Gastrocnemius medialis (tissue), 4 donors: ENCODE measurements at regions of chr11 and their contacts with region 1.

Region 1: DNA sequence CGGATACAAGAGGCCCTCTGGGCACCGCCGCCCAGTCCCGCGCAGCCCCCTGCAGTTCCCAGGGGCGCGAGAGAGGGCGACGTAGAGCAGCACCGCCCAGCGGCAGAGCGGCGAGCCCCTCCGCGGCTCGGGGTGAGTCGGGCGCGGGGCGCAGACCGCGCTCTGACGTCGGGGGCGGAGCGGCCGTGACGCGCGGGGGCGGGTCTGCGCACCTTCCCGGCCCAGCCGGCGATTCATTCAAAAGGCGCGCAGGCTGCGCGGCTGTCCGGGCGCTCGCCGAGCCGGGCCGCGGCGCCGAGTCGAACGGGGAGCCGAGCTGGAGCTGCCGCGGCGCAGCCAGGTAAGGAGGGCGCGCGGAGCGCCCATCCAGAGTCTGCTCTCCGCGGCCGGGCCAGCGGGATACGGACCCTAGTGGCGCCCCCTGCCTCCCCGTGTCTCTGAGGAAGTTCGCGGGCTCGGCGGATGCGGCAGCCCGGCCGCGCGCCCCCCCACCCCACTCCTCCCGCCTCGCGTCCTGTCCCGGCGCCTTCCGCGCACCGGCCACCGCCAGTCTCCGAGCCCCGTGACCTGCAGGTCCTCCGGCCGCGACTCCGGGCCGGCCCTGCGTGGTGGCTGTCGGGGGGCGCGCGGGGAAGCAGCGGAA is at the start of gene RELT:
- DNase-seq: peak; percentile 78 to 85
- ATAC-seq: peak; percentile 60 to 64
- H3K4me3 ChIP-seq: peak within 1 kb of the TSS; percentile 60 to 94 (median 76)
- H3K27ac ChIP-seq: peak within 1 kb of the TSS; percentile 87 to 99 (median 98)
- H3K4me1 ChIP-seq: peaks cover 39 to 44% of the 10 kb centered on the region in 2 donors
- H3K27me3 ChIP-seq: no peaks in the 10 kb centered on the region
- CTCF ChIP-seq: peak; percentile 90 to 98 (median 96)
- POLR2A ChIP-seq: peak; percentile 100
- total RNA-seq, gene RELT: 18.5 to 63.5 (median 36.7) TPM

Region 2: DNA sequence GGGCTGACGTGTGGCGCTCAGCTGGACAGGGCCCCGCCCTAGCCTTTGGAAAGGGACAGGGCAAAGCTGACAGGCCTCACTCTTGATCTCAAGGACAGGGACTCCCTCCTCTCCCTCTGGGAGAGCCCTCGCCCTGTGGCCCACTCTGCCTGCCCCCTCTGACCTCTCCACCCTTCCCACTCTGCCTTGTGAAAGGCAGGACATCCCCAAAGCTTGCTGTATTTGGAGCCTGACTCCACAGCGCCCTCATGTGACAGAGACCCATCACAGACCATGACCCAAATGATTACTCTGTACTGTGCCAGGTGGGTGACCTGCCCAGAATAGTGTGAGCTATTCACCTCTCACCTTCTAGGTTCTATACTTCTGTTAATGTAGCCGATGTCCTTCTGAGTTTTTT is 139.4 kb before region 1 on chr11:
- in situ Hi-C with region 1: no loop called
- intact Hi-C with region 1: loop called (anchors 5 kb)
- DNase-seq: peak; percentile 64 to 91
- ATAC-seq: peak; percentile 39 to 42
- H3K4me3 ChIP-seq: no peak overlapping the region
- H3K27ac ChIP-seq: peak overlapping the region; percentile 92 to 98 (median 96)
- H3K4me1 ChIP-seq: peaks cover 62 to 81% of the 10 kb centered on the region in 2 donors
- H3K27me3 ChIP-seq: no peaks in the 10 kb centered on the region
- CTCF ChIP-seq: peak; percentile 59 to 74 (median 63)
- POLR2A ChIP-seq: no peak

Region 3: DNA sequence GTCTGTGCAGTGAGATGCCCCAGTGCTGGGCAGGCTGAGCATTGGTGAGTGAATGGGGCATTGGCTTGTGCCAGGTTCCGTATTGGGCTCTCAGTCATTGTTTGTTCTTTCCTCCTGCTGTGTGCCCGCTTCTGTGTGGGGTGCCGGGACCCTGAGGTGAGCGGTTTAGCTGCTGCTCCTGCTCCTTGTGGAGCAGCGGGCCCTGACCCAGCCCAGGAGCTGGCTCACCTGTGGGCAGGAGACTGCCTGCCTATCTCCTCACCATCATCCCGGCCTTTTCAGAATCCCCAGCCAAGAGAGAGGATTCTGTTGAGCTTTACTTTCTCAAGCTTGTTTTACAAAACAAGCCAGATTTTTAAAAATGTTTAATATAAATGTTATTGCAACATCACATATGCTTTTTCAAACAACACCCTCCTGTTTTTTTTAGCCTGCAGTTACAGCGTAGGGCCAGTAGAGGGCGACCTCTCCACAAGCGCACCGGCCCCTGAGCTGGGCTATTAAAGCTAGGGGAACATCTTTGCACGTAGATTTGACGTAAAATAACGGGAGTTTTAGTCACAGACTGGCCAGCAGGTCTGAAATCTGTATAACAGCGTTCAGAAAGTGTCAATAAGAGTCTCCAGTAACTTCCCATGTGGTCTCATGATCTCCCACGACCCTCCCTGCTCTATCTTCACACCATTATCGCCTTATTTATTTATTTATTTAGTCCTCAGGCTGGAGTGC is 25.2 kb before region 1 on chr11:
- in situ Hi-C with region 1: no loop called
- intact Hi-C with region 1: loop called (anchors 2 kb)
- DNase-seq: peak in 1 of 2 donors; percentile 51
- ATAC-seq: peak; percentile 81
- H3K4me3 ChIP-seq: no peak overlapping the region
- H3K27ac ChIP-seq: peak overlapping the region in 3 of 4 donors; percentile 7 to 27 (median 21)
- H3K4me1 ChIP-seq: peaks cover 0 to 5% of the 10 kb centered on the region in 2 donors
- H3K27me3 ChIP-seq: no peaks in the 10 kb centered on the region
- CTCF ChIP-seq: peak; percentile 92 to 97 (median 96)
- POLR2A ChIP-seq: no peak

Region 4: GRCh38 chr11:73393479-73394380 is 17.4 kb after region 1 on chr11:
- in situ Hi-C with region 1: no loop called
- intact Hi-C with region 1: loop called (anchors 2 kb)
- DNase-seq: peak; percentile 44 to 75
- ATAC-seq: peak; percentile 55 to 72
- H3K4me3 ChIP-seq: no peak overlapping the region
- H3K27ac ChIP-seq: peak overlapping the region in 2 of 4 donors; percentile 27 to 53
- H3K4me1 ChIP-seq: peaks cover 30 to 60% of the 10 kb centered on the region in 2 donors
- H3K27me3 ChIP-seq: no peaks in the 10 kb centered on the region
- CTCF ChIP-seq: peak; percentile 77 to 91 (median 88)
- POLR2A ChIP-seq: no peak

Region 5: DNA sequence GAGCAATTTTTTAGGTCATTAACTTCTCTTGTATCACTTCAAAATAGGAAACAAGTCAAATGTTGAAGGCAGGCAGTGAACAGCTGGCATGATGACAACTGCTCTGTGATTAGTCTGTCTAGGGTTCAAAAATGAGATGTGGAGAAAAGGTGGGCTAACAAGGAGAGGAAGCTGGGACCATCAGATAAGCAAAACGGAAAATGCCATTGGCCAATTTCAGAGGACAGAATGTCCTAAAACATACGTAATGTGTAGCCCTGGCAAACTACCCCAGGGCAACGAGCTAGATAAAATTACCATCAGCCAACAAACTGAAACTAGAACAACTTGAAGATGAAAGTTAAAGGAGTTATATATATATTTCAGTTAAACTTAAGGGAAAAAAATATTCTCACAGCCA is 93.1 kb after region 1 on chr11:
- in situ Hi-C with region 1: no loop called
- intact Hi-C with region 1: loop called (anchors 5 kb)
- DNase-seq: peak; percentile 47 to 75
- ATAC-seq: peak; percentile 72 to 89
- H3K4me3 ChIP-seq: peak overlapping the region; percentile 18 to 36 (median 34)
- H3K27ac ChIP-seq: peak overlapping the region; percentile 83 to 94 (median 92)
- H3K4me1 ChIP-seq: peaks cover 63 to 65% of the 10 kb centered on the region in 2 donors
- H3K27me3 ChIP-seq: no peaks in the 10 kb centered on the region
- CTCF ChIP-seq: no peak
- POLR2A ChIP-seq: no peak

Region 6: DNA sequence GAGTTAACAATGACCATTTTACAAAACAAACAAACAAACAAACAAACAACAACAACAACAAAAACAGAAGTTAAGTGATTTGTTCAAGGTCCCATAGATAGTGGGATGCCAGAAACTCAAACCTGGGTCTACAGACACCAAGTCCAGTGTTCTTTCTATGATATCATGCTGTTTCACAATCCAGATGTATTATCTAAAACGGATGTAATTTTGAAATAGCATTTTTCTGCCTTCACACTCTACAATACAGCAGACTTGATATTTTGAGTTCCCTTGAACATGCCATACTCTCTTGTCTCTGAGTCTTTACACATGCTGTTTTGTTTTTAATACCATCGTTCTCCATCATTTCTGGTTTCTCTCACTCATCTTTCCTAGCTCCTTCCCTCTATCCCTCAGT is 104.4 kb after region 1 on chr11:
- in situ Hi-C with region 1: no loop called
- intact Hi-C with region 1: no loop called
- DNase-seq: no peak
- ATAC-seq: no peak
- H3K4me3 ChIP-seq: no peak overlapping the region
- H3K27ac ChIP-seq: no peak overlapping the region
- H3K4me1 ChIP-seq: peaks cover 6 to 10% of the 10 kb centered on the region in 2 donors
- H3K27me3 ChIP-seq: no peaks in the 10 kb centered on the region
- CTCF ChIP-seq: no peak
- POLR2A ChIP-seq: no peak